Left ventricle myocardium superior (tissue), 1 donor: ENCODE measurements at regions of chr9 and their contacts with region 1.

Region 1: GRCh38 chr9:1009101-1009707 is 32.7 kb downstream of the DMRT3 start:
- DNase-seq: peak; percentile 88
- ATAC-seq: peak; percentile 96

Region 2: GRCh38 chr9:806285-807156 is 202.7 kb before region 1 on chr9:
- intact Hi-C with region 1: loop called (anchors 5 kb)
- DNase-seq: no peak
- ATAC-seq: peak; percentile 28

Region 3: DNA sequence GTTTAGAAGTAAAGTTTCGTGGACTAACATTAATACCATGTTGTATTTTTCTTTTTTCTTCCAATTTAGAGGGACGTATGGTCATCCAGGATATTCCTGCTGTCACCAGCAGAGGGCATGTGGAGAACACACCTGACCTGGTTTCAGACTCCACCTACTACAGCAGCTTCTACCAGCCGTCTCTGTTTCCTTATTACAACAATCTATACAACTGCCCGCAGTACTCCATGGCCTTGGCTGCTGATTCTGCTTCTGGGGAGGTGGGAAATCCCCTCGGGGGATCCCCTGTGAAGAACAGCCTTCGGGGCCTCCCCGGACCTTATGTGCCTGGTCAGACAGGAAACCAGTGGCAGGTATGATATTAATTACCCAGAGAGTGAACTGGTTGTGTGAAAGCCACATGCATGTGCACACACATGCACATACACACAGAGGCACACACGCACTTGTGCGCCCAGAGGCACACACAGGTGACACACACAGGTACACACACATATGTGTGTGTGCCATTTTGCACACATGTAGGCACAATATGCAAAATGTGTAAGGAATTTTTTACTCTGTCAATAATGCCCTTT is 115.3 kb before region 1 on chr9:
- intact Hi-C with region 1: loop called (anchors 5 kb)
- DNase-seq: peak; percentile 34
- ATAC-seq: peak; percentile 67

Region 4: DNA sequence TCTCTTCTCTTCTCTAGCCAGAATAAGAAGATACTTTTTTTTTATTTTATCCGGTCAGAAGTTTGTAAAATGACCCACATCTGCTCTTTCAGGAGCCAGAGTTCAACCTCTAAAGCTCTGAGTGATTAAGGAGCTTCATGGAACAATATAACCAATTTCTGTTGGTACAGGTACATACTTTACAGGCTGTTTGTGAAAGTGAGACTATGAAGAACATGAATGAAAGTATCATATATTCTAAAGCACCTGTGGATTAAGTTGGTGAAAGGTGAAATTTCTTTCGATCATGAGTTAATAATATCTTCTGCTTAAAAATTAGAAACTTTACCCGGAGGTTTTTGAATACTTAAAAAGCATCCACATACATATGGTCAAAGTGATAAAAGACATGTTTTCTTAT is 106.2 kb after region 1 on chr9:
- intact Hi-C with region 1: no loop called
- DNase-seq: no peak
- ATAC-seq: no peak